ENCODE measurements at regions of chr17 and their contacts with region 1.

Region 1: GRCh38 chr17:29019475-29020181 is 13.8 kb upstream of the SEZ6 start:
- DNase-seq: peak; percentile 72
- ATAC-seq: peak; percentile 72
- H3K4me3 Mint-ChIP-seq: peak overlapping the region; percentile 62
- H3K27ac Mint-ChIP-seq: peak overlapping the region; percentile 69; the same call in 1 of the 2 replicates
- H3K4me1 Mint-ChIP-seq: peaks cover 67% of the 10 kb centered on the region
- H3K27me3 Mint-ChIP-seq: peaks cover 29% of the 10 kb centered on the region
- CTCF ChIP-seq: no peak

Region 2: DNA sequence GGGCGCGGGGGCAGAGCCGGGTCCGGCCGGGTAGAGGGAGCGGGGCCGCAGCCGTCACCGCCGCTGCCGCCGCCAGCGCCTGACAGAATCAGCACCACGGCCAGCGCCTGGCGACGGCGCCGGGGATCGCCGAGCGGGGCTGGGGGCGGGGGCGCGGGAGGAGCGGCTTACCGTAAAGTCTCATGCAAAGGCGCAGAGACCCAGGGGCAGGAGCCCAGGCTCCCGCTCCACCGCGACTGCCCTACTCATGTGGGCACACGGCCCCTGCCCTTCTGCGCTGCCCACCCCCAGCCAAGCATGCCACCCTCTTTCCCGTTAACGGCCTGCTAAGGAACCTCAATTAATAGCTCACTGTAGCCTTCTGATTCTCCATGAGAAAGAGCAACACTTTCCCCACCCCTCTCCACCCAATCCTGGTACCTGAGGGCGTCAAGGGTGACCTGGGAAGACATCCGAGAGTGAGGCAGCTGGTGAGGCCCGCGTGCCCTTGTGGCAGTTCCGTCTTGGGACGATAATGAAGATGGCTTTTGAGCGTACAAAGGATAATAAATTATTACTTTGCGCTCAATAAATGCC is 13.6 kb before region 1 on chr17 and contains the start of gene SEZ6:
- CTCF ChIA-PET with region 1: interaction called, 19 read pairs
- POLR2A ChIA-PET with region 1: interaction called, 3 read pairs
- DNase-seq: peak; percentile 91
- ATAC-seq: peak; percentile 63
- H3K4me3 Mint-ChIP-seq: peak within 1 kb of the TSS; percentile 69
- H3K27ac Mint-ChIP-seq: no peak within 1 kb of the TSS
- H3K4me1 Mint-ChIP-seq: peaks cover 76% of the 10 kb centered on the region
- H3K27me3 Mint-ChIP-seq: peaks cover 50% of the 10 kb centered on the region
- CTCF ChIP-seq: no peak
- total RNA-seq, gene SEZ6: 1.4 to 3.0 TPM (median 1.6 TPM) in 3 replicates

Region 3: GRCh38 chr17:29036584-29036983 is 17.0 kb after region 1 on chr17:
- CTCF ChIA-PET with region 1: interaction called, 12 read pairs
- POLR2A ChIA-PET with region 1: interaction called, 13 read pairs
- DNase-seq: no peak
- ATAC-seq: 0 out of 2 replicates have a peak, but pooled peaks have one; percentile 6
- H3K4me3 Mint-ChIP-seq: no peak overlapping the region
- H3K27ac Mint-ChIP-seq: peak overlapping the region; percentile 64; the same call in 1 of the 2 replicates
- H3K4me1 Mint-ChIP-seq: peaks cover 38% of the 10 kb centered on the region
- H3K27me3 Mint-ChIP-seq: peaks cover 20% of the 10 kb centered on the region
- CTCF ChIP-seq: no peak

Region 4: GRCh38 chr17:29042679-29043538 is 23.3 kb after region 1 on chr17 and contains the start of gene PIPOX:
- CTCF ChIA-PET with region 1: interaction called, 11 read pairs
- POLR2A ChIA-PET with region 1: interaction called, 4 read pairs
- DNase-seq: peak; percentile 80
- ATAC-seq: peak; percentile 87
- H3K4me3 Mint-ChIP-seq: peak within 1 kb of the TSS; percentile 41
- H3K27ac Mint-ChIP-seq: peak within 1 kb of the TSS; percentile 98
- H3K4me1 Mint-ChIP-seq: peaks cover 63% of the 10 kb centered on the region
- H3K27me3 Mint-ChIP-seq: no peaks in the 10 kb centered on the region
- CTCF ChIP-seq: no peak
- total RNA-seq, gene PIPOX: 32.4 to 34.2 TPM (median 34.1 TPM) in 3 replicates

Region 5: DNA sequence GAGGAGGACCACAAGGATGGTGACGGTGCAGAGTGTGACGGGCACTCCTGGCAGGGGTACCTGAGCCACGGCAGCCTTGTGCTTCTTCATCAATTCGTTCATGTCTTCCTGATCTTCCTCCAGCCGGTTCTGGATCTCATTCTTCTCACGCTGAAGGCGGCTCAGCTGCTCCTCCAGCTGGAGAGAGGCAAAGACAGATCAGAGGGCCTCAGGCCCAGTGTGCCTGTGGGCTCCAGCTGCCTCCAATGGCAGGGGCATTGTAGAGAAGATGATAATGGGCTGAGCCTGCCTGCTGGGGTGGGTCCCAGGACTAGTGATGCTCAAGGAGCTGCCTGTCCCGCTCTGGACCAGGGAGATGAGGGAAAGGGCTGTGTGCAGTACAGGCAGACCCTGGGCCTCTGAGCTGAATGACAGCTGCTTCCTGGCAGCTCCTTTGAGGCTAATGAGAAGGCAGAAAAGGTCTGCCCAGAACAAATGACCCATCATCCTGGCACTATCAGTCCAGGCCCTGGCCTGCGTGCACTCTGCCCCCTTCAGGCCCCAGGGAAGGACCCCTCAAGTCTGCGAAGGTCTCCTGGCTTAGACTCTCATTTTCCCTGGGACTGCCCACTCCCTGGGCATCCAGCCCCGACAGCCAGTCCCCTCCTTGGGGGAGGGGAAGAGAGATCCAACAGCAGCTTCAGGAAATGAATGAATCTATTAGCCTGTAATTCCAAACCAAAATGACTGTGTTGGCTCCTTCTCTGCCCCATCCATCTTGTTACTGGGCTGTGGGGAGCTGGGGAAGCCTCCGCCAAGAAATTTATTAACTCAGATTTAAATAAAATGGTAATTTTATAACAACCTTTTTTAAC is 71.3 kb after region 1 on chr17:
- CTCF ChIA-PET with region 1: interaction called, 10 read pairs
- POLR2A ChIA-PET with region 1: no interaction called
- DNase-seq: no peak
- ATAC-seq: no peak; the same call in 1 of the 2 replicates
- H3K4me3 Mint-ChIP-seq: no peak overlapping the region
- H3K27ac Mint-ChIP-seq: peak overlapping the region; percentile 66
- H3K4me1 Mint-ChIP-seq: peaks cover 29% of the 10 kb centered on the region
- H3K27me3 Mint-ChIP-seq: no peaks in the 10 kb centered on the region
- CTCF ChIP-seq: no peak

Region 6: DNA sequence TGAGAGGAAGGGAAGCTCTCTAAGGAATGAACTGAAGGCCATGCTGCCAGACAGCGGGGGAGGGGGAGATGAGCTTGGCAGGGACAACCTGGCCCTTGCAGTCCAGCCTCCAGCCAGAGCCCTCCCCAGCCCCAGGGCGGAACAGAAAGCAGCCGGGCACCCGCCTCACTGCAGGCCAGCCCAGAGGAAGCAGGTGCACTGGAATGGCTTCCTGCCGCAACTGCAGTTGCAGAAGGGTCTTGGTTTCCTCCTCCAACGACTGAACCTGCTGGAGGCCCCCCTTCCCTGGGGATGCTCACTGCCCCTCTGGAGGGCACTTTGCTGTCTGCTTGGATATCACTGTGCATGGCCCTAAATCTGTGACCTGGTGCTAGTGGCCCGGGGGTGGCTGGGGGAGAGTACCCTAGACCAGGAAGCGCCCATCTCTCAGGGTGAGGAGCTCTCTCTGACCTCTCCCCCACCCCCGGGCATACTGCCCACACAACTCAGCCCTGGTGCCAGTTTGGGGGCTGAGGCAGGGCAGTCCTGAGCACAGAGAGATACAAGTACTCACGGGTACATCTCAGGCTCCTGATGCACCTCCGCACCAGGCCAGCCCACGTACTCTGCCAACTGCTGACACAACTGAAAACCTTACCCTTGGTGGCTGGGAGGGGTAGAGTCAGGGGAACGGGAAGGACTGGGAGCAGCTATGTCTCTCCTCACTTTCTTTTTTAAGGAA is 119.5 kb after region 1 on chr17:
- CTCF ChIA-PET with region 1: no interaction called
- POLR2A ChIA-PET with region 1: no interaction called
- DNase-seq: no peak
- ATAC-seq: no peak
- H3K4me3 Mint-ChIP-seq: no peak overlapping the region
- H3K27ac Mint-ChIP-seq: no peak overlapping the region
- H3K4me1 Mint-ChIP-seq: peaks cover 34% of the 10 kb centered on the region
- H3K27me3 Mint-ChIP-seq: no peaks in the 10 kb centered on the region
- CTCF ChIP-seq: no peak

Measured in WTC11 (cell line).